PC-9 (cell line): ENCODE measurements at regions of chr5 and their contacts with region 1.

Region 1: DNA sequence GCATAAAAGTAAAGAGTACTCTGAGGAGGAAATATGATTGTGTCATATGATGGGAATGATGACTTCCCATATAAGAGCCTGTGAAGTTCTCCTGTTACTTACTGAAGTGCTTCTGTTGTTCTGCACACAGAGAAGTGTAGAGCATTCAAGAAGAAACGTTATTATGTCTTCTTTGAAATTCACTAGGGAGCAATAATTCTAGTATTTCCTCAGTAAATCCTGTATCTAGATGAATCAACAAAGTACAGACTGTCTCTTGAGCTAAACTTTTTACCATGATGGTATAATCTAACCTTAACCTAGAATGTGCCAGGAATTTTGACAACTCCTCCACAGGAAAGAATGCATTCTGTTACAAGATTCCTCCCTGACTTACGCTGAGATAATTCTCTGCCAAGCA is 18.9 kb upstream of the GHR start:
- DNase-seq: no peak
- H3K4me3 ChIP-seq: no peak overlapping the region
- H3K27ac ChIP-seq: no peak overlapping the region
- H3K4me1 ChIP-seq: no peaks in the 10 kb centered on the region
- H3K27me3 ChIP-seq: no peaks in the 10 kb centered on the region
- CTCF ChIP-seq: no peak

Region 2: DNA sequence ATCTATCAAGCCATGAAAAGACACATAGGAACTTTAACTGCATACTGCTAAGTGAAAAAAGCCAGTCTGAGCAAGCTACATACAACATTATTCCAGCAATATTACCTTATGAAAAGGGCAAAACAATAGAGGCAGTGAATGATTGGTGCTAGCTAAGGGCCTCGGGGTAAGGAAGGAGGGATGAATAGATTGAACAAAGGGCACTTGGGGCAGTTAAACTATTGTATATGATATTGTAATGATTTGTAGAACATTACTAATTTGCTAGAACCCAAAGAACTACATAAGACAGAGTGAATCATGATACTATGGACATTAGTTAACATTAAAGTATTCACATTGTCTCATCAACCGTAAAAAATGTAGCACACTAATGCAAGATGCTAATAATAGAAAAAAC is 261.0 kb before region 1 on chr5:
- CTCF ChIA-PET with region 1: no interaction called
- POLR2A ChIA-PET with region 1: no interaction called
- intact Hi-C with region 1: no loop called
- DNase-seq: no peak
- H3K4me3 ChIP-seq: no peak overlapping the region
- H3K27ac ChIP-seq: no peak overlapping the region
- H3K4me1 ChIP-seq: no peaks in the 10 kb centered on the region
- H3K27me3 ChIP-seq: 0 out of 2 replicates have a peak, but pooled peaks cover 7% of the 10 kb centered on the region
- CTCF ChIP-seq: no peak

Region 3: GRCh38 chr5:42429694-42430093 is 25.3 kb after region 1 on chr5:
- CTCF ChIA-PET with region 1: no interaction called
- POLR2A ChIA-PET with region 1: no interaction called
- intact Hi-C with region 1: no loop called
- DNase-seq: no peak
- H3K4me3 ChIP-seq: no peak overlapping the region
- H3K27ac ChIP-seq: no peak overlapping the region
- H3K4me1 ChIP-seq: no peaks in the 10 kb centered on the region
- H3K27me3 ChIP-seq: no peaks in the 10 kb centered on the region
- CTCF ChIP-seq: no peak

Region 4: DNA sequence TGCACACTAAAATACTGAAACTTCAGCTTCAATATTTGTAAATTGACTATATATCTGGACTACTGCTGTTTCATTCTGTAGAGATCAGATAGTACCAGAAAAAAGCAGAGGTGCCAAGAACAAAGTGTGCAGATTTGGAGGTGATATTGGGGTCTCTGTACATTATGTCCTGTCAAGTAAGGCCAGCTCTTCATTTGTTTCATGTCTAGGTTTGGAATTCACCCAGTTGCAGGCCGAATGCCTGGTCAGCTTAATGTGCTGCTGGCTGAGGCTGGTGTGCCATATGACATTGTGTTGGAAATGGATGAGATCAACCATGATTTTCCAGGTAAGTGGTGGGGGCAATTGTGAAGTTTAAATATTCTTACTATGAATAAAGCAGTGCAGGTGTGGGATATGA is 1295.5 kb after region 1 on chr5:
- CTCF ChIA-PET with region 1: no interaction called
- POLR2A ChIA-PET with region 1: interaction called, 10 read pairs
- intact Hi-C with region 1: no loop called
- DNase-seq: no peak
- H3K4me3 ChIP-seq: no peak overlapping the region
- H3K27ac ChIP-seq: no peak overlapping the region
- H3K4me1 ChIP-seq: no peaks in the 10 kb centered on the region
- H3K27me3 ChIP-seq: no peaks in the 10 kb centered on the region
- CTCF ChIP-seq: no peak